ENCODE measurements at regions of chr12 and their contacts with region 1.

Region 1: GRCh38 chr12:116773276-116773731 is 35.2 kb downstream of the RNFT2 start:
- DNase-seq: no peak
- ATAC-seq: 0 out of 2 replicates have a peak, but pooled peaks have one; percentile 48
- H3K4me3 ChIP-seq: no peak overlapping the region
- H3K27ac ChIP-seq: no peak overlapping the region
- H3K4me1 ChIP-seq: no peaks in the 10 kb centered on the region
- H3K27me3 ChIP-seq: no peaks in the 10 kb centered on the region
- CTCF ChIP-seq: no peak
- POLR2A ChIP-seq: no peak
- RAD21 ChIP-seq: no peak

Region 2: DNA sequence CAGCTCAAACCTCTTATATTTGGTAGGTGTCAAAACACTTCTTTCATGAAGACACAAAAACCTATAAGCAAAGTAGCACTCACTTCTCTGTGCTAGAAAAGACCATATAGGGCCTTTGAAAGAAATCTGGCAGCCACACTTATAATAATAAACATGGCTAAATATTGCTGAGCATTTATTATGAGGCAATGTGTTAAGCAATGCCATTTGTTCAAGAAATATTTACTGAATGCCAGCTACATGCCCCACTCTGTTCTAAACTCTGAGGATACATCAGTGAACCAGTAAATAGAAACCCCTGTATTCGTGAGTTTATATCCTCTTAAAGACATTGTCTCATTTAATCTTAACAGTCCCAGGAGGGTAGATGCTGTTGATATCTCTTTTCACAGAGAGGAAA is 16.8 kb after region 1 on chr12:
- CTCF ChIA-PET with region 1: no interaction called
- POLR2A ChIA-PET with region 1: no interaction called
- dilution Hi-C with region 1: no loop called
- in situ Hi-C with region 1: no loop called
- intact Hi-C with region 1: loop called (anchors 1 kb)
- DNase-seq: peak; percentile 16
- ATAC-seq: peak; percentile 61
- H3K4me3 ChIP-seq: no peak overlapping the region
- H3K27ac ChIP-seq: no peak overlapping the region
- H3K4me1 ChIP-seq: no peaks in the 10 kb centered on the region; the same call in 1 of the 2 replicates
- H3K27me3 ChIP-seq: no peaks in the 10 kb centered on the region
- CTCF ChIP-seq: no peak
- POLR2A ChIP-seq: no peak
- RAD21 ChIP-seq: no peak

Region 3: DNA sequence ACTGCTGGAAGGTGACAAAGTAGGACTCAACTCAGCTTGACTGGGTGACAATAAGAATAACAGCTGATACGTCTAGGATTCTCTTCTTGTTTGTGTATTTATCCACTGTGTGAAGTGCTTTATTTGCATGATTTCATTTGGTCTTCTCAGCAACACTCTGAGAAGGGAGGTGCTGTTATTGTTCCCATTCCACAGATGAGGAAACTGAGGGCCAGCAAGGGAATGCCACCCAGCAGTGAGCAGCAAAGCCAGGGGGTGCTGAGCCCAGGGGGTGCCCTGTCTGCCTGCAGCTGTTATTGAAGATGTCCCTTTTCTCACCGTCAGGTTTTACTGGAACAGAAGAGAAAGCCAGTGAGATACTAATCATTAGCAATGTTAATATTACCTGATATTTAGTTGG is 27.6 kb after region 1 on chr12:
- CTCF ChIA-PET with region 1: interaction called, 13 read pairs
- POLR2A ChIA-PET with region 1: no interaction called
- dilution Hi-C with region 1: no loop called
- in situ Hi-C with region 1: no loop called
- intact Hi-C with region 1: no loop called
- DNase-seq: no peak
- ATAC-seq: no peak
- H3K4me3 ChIP-seq: no peak overlapping the region
- H3K27ac ChIP-seq: no peak overlapping the region
- H3K4me1 ChIP-seq: no peaks in the 10 kb centered on the region
- H3K27me3 ChIP-seq: no peaks in the 10 kb centered on the region
- CTCF ChIP-seq: no peak
- POLR2A ChIP-seq: no peak
- RAD21 ChIP-seq: no peak